ENCODE measurements at regions of chr7 and their contacts with region 1.

Region 1: GRCh38 chr7:133869556-133869955 is 257.6 kb upstream of the LRGUK start:
- DNase-seq: no peak
- ATAC-seq: no peak
- H3K4me3 ChIP-seq: no peak overlapping the region
- H3K4me3 Mint-ChIP-seq: no peak overlapping the region
- H3K27ac ChIP-seq: no peak overlapping the region
- H3K27ac Mint-ChIP-seq: no peak overlapping the region
- H3K4me1 ChIP-seq: peaks cover 2% of the 10 kb centered on the region
- H3K4me1 Mint-ChIP-seq: peaks cover 46% of the 10 kb centered on the region
- H3K27me3 ChIP-seq: no peaks in the 10 kb centered on the region
- H3K27me3 Mint-ChIP-seq: no peaks in the 10 kb centered on the region
- CTCF ChIP-seq: no peak

Region 2: DNA sequence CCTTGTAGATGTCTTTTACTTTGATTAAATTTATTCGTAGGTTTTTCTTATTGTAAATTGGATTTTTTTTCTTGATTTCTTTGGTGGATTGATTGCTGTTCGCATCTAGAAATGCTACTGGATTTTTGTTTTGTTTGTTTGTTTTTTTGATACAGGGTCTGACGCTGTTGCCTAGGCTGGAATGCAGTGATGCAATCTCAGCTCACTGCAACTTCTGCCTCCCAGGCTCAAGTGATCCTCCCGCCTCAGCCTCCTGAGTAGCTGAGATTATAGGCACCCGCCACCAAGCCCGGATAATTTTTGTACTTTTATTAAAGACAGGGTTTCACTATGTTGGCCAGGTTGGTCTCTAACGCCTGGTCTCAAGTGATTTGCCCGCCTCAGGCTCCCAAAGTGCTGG is 122.6 kb after region 1 on chr7:
- CTCF ChIA-PET with region 1: no interaction called
- POLR2A ChIA-PET with region 1: no interaction called
- intact Hi-C with region 1: loop called in 1 of 2 experiments (anchors 5 kb)
- DNase-seq: no peak
- ATAC-seq: no peak
- H3K4me3 ChIP-seq: no peak overlapping the region
- H3K4me3 Mint-ChIP-seq: no peak overlapping the region
- H3K27ac ChIP-seq: no peak overlapping the region
- H3K27ac Mint-ChIP-seq: no peak overlapping the region
- H3K4me1 ChIP-seq: no peaks in the 10 kb centered on the region
- H3K4me1 Mint-ChIP-seq: no peaks in the 10 kb centered on the region
- H3K27me3 ChIP-seq: no peaks in the 10 kb centered on the region
- H3K27me3 Mint-ChIP-seq: no peaks in the 10 kb centered on the region
- CTCF ChIP-seq: no peak

Region 3: GRCh38 chr7:134827889-134828288 is 958.3 kb after region 1 on chr7:
- CTCF ChIA-PET with region 1: no interaction called
- POLR2A ChIA-PET with region 1: no interaction called
- intact Hi-C with region 1: no loop called
- DNase-seq: no peak
- ATAC-seq: no peak
- H3K4me3 ChIP-seq: no peak overlapping the region
- H3K4me3 Mint-ChIP-seq: no peak overlapping the region
- H3K27ac ChIP-seq: no peak overlapping the region
- H3K27ac Mint-ChIP-seq: no peak overlapping the region
- H3K4me1 ChIP-seq: no peaks in the 10 kb centered on the region
- H3K4me1 Mint-ChIP-seq: no peaks in the 10 kb centered on the region
- H3K27me3 ChIP-seq: no peaks in the 10 kb centered on the region
- H3K27me3 Mint-ChIP-seq: no peaks in the 10 kb centered on the region
- CTCF ChIP-seq: no peak